OCI-LY7 (cell line): ENCODE measurements at regions of chr12 and their contacts with region 1.

Region 1: GRCh38 chr12:14157088-14157747 is 175.8 kb upstream of the GRIN2B start:
- DNase-seq: peak; percentile 99
- H3K4me3 ChIP-seq: peak overlapping the region; percentile 49
- H3K27ac ChIP-seq: peak overlapping the region; percentile 97
- H3K4me1 ChIP-seq: peaks cover 85% of the 10 kb centered on the region
- CTCF ChIP-seq: no peak

Region 2: DNA sequence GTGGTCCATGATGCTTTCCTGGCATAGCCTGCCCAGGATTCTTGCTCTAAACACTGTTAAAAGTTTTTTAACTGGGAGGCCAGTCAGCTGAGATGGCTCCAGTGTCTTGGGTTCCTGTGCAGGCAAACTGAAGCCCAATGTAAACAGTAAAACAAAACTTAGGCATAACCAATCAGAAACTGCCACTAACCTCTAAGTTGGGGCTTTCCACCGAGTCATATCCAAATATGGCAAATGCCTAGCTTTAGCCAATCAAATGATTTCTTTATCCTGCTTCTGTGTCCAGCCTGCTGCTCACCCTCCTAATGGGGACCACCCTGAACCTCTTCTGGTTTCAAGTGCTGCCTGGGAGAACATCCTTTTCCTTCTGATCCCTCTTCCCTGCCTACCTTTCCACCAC is 682.8 kb before region 1 on chr12:
- CTCF ChIA-PET with region 1: no interaction called
- POLR2A ChIA-PET with region 1: no interaction called
- intact Hi-C with region 1: no loop called
- DNase-seq: no peak
- H3K4me3 ChIP-seq: no peak overlapping the region
- H3K27ac ChIP-seq: no peak overlapping the region
- H3K4me1 ChIP-seq: no peaks in the 10 kb centered on the region
- CTCF ChIP-seq: no peak

Region 3: GRCh38 chr12:14111230-14111865 is 45.9 kb before region 1 on chr12:
- CTCF ChIA-PET with region 1: no interaction called
- POLR2A ChIA-PET with region 1: interaction called, 10 read pairs
- intact Hi-C with region 1: loop called (anchors 2 kb)
- DNase-seq: peak; percentile 96
- H3K4me3 ChIP-seq: peak overlapping the region; percentile 21
- H3K27ac ChIP-seq: peak overlapping the region; percentile 65
- H3K4me1 ChIP-seq: peaks cover 33% of the 10 kb centered on the region
- CTCF ChIP-seq: peak; percentile 89

Region 4: DNA sequence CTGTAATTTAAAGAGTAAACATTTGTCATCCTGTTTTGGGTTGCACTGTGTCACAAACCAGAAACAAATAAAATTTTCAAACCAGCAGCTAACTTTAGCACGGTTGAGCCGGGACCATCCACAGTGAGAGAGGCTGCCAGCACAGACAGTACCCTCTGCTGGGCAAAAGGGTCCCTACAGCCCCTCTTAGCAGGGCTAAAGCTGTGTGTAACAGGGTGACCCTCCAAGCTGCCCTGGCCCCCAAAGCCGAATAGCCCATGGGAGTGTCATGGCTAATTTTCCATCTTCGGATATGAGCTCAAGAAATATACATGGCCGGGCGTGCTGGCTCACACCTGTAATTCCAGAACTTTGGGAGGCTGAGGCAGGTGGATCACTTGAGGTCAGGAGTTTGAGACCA is 18.7 kb before region 1 on chr12:
- CTCF ChIA-PET with region 1: no interaction called
- POLR2A ChIA-PET with region 1: interaction called, 14 read pairs
- intact Hi-C with region 1: no loop called
- DNase-seq: peak; percentile 66
- H3K4me3 ChIP-seq: no peak overlapping the region
- H3K27ac ChIP-seq: no peak overlapping the region
- H3K4me1 ChIP-seq: peaks cover 7% of the 10 kb centered on the region
- CTCF ChIP-seq: peak; percentile 81

Region 5: DNA sequence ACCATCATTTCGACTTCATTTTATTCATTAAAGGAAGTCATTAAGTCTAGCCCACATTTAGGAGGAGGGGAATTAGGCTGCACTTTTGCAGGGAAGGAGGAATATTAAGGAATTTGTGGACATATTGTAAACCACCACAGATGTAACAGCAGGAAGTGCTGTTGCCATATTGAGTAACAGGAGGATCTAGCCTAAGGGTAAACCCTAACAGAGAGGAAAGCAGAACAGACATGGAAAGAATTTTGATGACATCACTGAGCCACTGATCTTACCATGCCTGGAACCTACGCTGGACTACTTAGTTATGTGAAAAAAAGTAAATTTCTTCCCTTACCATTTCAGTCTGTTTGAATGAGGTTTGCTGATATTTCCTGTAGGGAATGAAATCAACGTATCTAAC is 107.6 kb after region 1 on chr12:
- CTCF ChIA-PET with region 1: no interaction called
- POLR2A ChIA-PET with region 1: no interaction called
- intact Hi-C with region 1: no loop called
- DNase-seq: no peak
- H3K4me3 ChIP-seq: no peak overlapping the region
- H3K27ac ChIP-seq: no peak overlapping the region
- H3K4me1 ChIP-seq: peaks cover 29% of the 10 kb centered on the region
- CTCF ChIP-seq: no peak

Region 6: DNA sequence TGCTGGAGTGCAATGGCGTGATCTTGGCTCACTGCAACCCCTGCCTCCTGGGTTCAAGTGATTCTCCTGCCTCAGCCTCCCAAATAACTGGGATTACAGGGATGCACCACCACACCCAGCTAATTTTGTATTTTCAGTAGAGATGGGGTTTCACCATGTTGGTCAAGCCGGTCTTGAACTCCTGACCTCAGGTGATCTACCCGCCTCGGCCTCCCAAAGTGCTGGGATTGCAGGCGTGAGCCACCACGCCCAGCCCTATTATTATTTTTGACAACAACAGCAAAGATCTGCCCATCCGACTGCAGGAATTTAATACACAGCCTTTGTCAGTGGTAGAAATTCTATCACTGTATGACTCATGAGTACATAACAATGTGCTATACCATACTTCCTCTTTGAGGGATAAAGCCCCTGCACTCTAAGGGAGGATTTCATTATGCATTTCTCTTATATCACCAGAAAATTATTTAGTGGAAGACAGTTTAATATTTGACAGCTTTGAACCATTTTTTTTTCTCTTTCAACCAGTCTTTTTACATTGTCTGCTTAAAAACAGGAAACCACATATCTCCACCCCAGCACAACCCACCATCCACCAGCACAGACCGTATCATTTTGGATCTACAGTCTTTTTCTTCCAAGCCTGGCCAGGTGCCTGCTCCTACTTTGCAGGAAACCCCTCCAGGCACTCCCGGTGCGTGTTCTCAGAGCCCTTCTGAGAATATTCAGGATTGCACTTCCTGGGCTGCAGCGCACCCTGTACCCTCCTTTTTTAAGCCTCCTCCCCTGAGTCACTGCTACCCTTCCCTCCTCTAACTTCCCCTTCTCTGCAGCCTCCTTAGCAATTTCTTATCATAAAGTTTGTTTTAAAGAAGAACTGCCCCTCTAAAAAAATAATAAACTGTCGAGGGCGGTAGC is 803.6 kb after region 1 on chr12:
- CTCF ChIA-PET with region 1: no interaction called
- POLR2A ChIA-PET with region 1: interaction called, 3 read pairs
- intact Hi-C with region 1: loop called (anchors 5 kb)
- DNase-seq: peak; percentile 42
- H3K4me3 ChIP-seq: peak overlapping the region; percentile 72
- H3K27ac ChIP-seq: peak overlapping the region; percentile 97
- H3K4me1 ChIP-seq: peaks cover 53% of the 10 kb centered on the region
- CTCF ChIP-seq: no peak